MCF 10A (cell line): ENCODE measurements at regions of chr5 and their contacts with region 1.

Region 1: DNA sequence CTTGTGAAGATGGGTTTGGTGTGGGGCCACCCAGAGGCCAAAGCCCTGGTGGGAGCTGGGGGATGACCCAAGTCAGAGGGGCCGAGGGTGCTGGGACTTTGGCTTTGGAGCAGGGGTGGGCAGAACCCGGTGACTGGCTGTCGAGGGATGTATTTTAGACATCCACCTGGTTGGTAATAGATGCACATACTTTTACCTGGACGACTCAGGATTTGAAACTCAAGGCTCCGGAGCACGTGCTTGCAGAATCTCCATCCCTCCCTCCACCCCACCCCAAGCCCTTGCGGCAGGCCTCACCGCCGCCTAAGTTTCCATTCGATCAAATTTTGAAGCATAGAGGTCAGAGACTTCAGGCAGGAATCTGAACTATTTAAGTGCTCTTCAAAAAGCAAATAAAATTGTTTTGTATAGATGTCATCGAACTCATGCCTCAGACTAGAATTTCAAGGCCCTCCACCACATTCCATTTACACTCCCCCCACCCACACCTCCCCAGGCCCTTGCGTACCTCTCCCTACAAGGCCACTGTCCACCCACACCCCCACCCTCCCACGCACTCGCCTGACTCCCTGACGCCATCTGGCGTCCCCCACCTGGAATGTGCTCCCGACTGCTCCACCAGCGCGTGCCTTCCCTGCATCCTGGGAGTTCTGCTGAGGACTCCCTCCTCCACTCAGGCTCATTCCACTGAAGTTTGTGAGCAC is 56.6 kb upstream of the RPL26L1 start:
- DNase-seq: peak; percentile 75
- H3K4me3 Mint-ChIP-seq: peak overlapping the region; percentile 45
- H3K27ac Mint-ChIP-seq: peak overlapping the region; percentile 98
- H3K4me1 Mint-ChIP-seq: peaks cover 82% of the 10 kb centered on the region
- H3K27me3 Mint-ChIP-seq: no peaks in the 10 kb centered on the region
- CTCF ChIP-seq: peak; percentile 27

Region 2: GRCh38 chr5:171390883-171391677 is 1511.6 kb before region 1 on chr5:
- CTCF ChIA-PET with region 1: no interaction called
- POLR2A ChIA-PET with region 1: no interaction called
- intact Hi-C with region 1: no loop called
- DNase-seq: no peak
- H3K4me3 Mint-ChIP-seq: peak overlapping the region; percentile 99
- H3K27ac Mint-ChIP-seq: peak overlapping the region; percentile 99
- H3K4me1 Mint-ChIP-seq: peaks cover 49% of the 10 kb centered on the region
- H3K27me3 Mint-ChIP-seq: no peaks in the 10 kb centered on the region
- CTCF ChIP-seq: no peak

Region 3: GRCh38 chr5:172733131-172733973 is 169.3 kb before region 1 on chr5:
- CTCF ChIA-PET with region 1: interaction called, 7 read pairs
- POLR2A ChIA-PET with region 1: interaction called, 42 read pairs
- intact Hi-C with region 1: loop called (anchors 5 kb)
- DNase-seq: peak; percentile 93
- H3K4me3 Mint-ChIP-seq: peak overlapping the region; percentile 63
- H3K27ac Mint-ChIP-seq: peak overlapping the region; percentile 99
- H3K4me1 Mint-ChIP-seq: peaks cover 44% of the 10 kb centered on the region
- H3K27me3 Mint-ChIP-seq: no peaks in the 10 kb centered on the region
- CTCF ChIP-seq: peak; percentile 18

Region 4: DNA sequence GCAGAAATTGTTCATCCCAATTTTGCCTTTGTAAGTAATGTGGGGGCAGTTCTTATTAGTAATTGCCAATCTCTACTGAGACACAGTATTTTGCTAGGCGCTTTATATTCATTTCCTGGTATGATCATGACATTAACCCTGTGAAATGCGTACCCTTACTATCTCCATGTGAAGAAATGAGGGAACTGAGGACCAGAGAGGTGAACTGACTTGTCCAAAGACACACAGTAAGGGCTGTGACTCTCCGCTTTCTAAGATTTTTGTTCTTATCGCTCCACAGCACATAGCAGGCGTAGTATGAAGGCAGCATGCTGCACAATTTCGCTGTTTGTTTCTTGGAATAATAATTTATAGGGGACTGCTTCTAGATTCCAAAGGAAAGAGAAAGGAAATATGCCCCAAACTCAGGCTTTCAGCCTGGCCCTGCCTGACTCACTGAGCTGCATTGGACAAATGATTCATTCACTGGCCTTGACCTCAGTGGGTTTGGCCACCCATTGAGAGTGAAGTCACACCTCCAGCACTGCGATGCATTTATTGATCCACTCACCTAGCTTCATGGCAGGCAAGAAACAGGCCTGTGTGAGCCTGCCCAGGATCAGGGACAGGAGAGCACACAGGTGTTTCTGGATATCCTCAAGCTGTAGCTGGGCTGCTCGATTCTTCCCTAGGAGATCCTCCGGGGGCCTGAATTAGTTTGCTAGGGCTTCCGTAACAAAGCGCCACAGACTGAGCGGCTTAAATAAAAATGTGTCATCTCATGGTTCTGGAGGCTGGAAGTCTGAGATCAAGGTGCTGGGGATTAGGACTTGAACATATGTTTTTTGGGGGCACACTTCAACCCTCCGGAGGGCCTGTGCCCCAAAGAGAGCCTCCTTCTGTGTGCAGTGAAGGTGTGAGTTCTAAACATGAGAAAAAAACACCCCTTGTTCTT is 124.5 kb before region 1 on chr5:
- CTCF ChIA-PET with region 1: interaction called, 35 read pairs
- POLR2A ChIA-PET with region 1: interaction called, 910 read pairs
- intact Hi-C with region 1: no loop called
- DNase-seq: peak; percentile 97
- H3K4me3 Mint-ChIP-seq: peak overlapping the region; percentile 69
- H3K27ac Mint-ChIP-seq: peak overlapping the region; percentile 99
- H3K4me1 Mint-ChIP-seq: peaks cover 70% of the 10 kb centered on the region
- H3K27me3 Mint-ChIP-seq: no peaks in the 10 kb centered on the region
- CTCF ChIP-seq: no peak

Region 5: GRCh38 chr5:172816901-172817564 is 85.6 kb before region 1 on chr5:
- CTCF ChIA-PET with region 1: interaction called, 6 read pairs
- POLR2A ChIA-PET with region 1: interaction called, 13 read pairs
- intact Hi-C with region 1: no loop called
- DNase-seq: peak; percentile 91
- H3K4me3 Mint-ChIP-seq: peak overlapping the region; percentile 38
- H3K27ac Mint-ChIP-seq: peak overlapping the region; percentile 20
- H3K4me1 Mint-ChIP-seq: peaks cover 31% of the 10 kb centered on the region
- H3K27me3 Mint-ChIP-seq: no peaks in the 10 kb centered on the region
- CTCF ChIP-seq: no peak

Region 6: GRCh38 chr5:172860520-172861443 is 41.9 kb before region 1 on chr5:
- CTCF ChIA-PET with region 1: interaction called, 5 read pairs
- POLR2A ChIA-PET with region 1: interaction called, 60 read pairs
- intact Hi-C with region 1: loop called (anchors 5 kb)
- DNase-seq: peak; percentile 96
- H3K4me3 Mint-ChIP-seq: peak overlapping the region; percentile 50
- H3K27ac Mint-ChIP-seq: peak overlapping the region; percentile 75
- H3K4me1 Mint-ChIP-seq: peaks cover 64% of the 10 kb centered on the region
- H3K27me3 Mint-ChIP-seq: no peaks in the 10 kb centered on the region
- CTCF ChIP-seq: no peak

Region 7: GRCh38 chr5:172920447-172920849 is 17.8 kb after region 1 on chr5:
- CTCF ChIA-PET with region 1: interaction called, 7 read pairs
- POLR2A ChIA-PET with region 1: interaction called, 34 read pairs
- intact Hi-C with region 1: no loop called
- DNase-seq: peak; percentile 95
- H3K4me3 Mint-ChIP-seq: no peak overlapping the region
- H3K27ac Mint-ChIP-seq: peak overlapping the region; percentile 89
- H3K4me1 Mint-ChIP-seq: peaks cover 26% of the 10 kb centered on the region
- H3K27me3 Mint-ChIP-seq: no peaks in the 10 kb centered on the region
- CTCF ChIP-seq: no peak